GM12878 (cell line): ENCODE measurements at regions of chr6 and their contacts with region 1.

Region 1: GRCh38 chr6:152552616-152553209 is 84.4 kb downstream of the SYNE1 start:
- DNase-seq: peak; percentile 11
- ATAC-seq: peak; percentile 99
- H3K4me3 ChIP-seq: no peak overlapping the region
- H3K27ac ChIP-seq: no peak overlapping the region
- H3K4me1 ChIP-seq: no peaks in the 10 kb centered on the region
- H3K27me3 ChIP-seq: no peaks in the 10 kb centered on the region
- CTCF ChIP-seq: peak; percentile 72 to 79 (median 72)
- EP300 ChIP-seq: no peak
- POLR2A ChIP-seq: no peak
- RAD21 ChIP-seq: peak; percentile 78

Region 2: DNA sequence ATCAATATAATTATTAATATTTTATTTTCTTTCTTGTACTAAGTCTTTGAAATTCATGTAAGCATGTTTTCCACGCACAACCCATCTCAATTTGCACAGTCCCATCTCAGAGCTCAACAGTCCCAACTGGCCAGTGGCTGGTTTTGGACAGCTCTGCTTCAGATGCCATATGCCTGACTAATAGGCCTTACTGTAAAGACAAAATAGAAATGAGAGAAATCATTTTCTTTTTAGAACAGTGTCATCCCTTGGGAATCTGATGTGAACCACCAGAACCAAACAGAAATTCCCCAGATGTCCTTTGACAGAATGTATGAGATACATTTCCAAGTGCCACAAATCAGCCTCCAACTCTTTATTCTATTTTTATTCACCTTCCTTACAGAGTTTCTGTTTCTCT is 406.3 kb before region 1 on chr6:
- CTCF ChIA-PET with region 1: no interaction called
- POLR2A ChIA-PET with region 1: no interaction called
- RAD21 ChIA-PET with region 1: no interaction called
- SMC1A ChIA-PET with region 1: no interaction called
- in situ Hi-C with region 1: no loop called
- intact Hi-C with region 1: no loop called
- DNase-seq: no peak
- ATAC-seq: no peak
- H3K4me3 ChIP-seq: no peak overlapping the region
- H3K27ac ChIP-seq: no peak overlapping the region
- H3K4me1 ChIP-seq: no peaks in the 10 kb centered on the region
- H3K27me3 ChIP-seq: no peaks in the 10 kb centered on the region
- CTCF ChIP-seq: no peak
- EP300 ChIP-seq: no peak
- POLR2A ChIP-seq: no peak
- RAD21 ChIP-seq: no peak

Region 3: DNA sequence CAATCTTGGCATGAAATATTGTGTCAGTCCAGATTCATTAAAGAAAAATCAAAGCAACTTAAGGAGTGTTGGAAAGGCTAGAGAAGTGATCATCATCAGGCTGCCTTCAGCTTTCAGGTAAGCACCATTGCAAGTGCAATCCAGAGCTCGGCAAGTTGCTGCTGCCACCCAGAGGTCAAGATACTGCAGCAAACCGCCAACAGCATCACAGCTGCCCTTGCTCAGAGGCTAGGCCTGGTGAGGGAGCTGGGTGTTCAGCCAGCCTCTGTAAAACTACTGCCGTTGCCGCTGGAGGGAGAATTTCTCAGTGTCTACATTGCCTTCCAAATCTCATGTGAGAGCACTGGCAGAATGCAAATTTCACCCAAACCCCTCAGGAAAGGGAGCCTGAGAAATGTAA is 90.3 kb after region 1 on chr6:
- CTCF ChIA-PET with region 1: interaction called, 16 read pairs
- POLR2A ChIA-PET with region 1: no interaction called
- RAD21 ChIA-PET with region 1: interaction called, 5 read pairs
- SMC1A ChIA-PET with region 1: interaction called, 6 read pairs
- in situ Hi-C with region 1: no loop called
- intact Hi-C with region 1: loop called (anchors 1 kb)
- DNase-seq: no peak
- ATAC-seq: peak; percentile 96
- H3K4me3 ChIP-seq: no peak overlapping the region
- H3K27ac ChIP-seq: no peak overlapping the region
- H3K4me1 ChIP-seq: no peaks in the 10 kb centered on the region
- H3K27me3 ChIP-seq: no peaks in the 10 kb centered on the region; a peak in 1 of 4 replicates
- CTCF ChIP-seq: peak; percentile 48 to 56 (median 51); a peak in 5 of 6 replicates
- EP300 ChIP-seq: no peak
- POLR2A ChIP-seq: no peak
- RAD21 ChIP-seq: peak; percentile 42

Region 4: GRCh38 chr6:152669895-152670294 is 117.2 kb after region 1 on chr6:
- CTCF ChIA-PET with region 1: interaction called, 6 read pairs
- POLR2A ChIA-PET with region 1: no interaction called
- RAD21 ChIA-PET with region 1: interaction called, 3 read pairs
- SMC1A ChIA-PET with region 1: interaction called, 4 read pairs
- in situ Hi-C with region 1: no loop called
- intact Hi-C with region 1: loop called (anchors 1 kb)
- DNase-seq: no peak
- ATAC-seq: peak; percentile 65
- H3K4me3 ChIP-seq: no peak overlapping the region
- H3K27ac ChIP-seq: no peak overlapping the region
- H3K4me1 ChIP-seq: no peaks in the 10 kb centered on the region
- H3K27me3 ChIP-seq: no peaks in the 10 kb centered on the region
- CTCF ChIP-seq: peak in 1 of 3 experiments; percentile 22; a peak in 2 of 6 replicates
- EP300 ChIP-seq: no peak
- POLR2A ChIP-seq: no peak
- RAD21 ChIP-seq: peak; percentile 47

Region 5: DNA sequence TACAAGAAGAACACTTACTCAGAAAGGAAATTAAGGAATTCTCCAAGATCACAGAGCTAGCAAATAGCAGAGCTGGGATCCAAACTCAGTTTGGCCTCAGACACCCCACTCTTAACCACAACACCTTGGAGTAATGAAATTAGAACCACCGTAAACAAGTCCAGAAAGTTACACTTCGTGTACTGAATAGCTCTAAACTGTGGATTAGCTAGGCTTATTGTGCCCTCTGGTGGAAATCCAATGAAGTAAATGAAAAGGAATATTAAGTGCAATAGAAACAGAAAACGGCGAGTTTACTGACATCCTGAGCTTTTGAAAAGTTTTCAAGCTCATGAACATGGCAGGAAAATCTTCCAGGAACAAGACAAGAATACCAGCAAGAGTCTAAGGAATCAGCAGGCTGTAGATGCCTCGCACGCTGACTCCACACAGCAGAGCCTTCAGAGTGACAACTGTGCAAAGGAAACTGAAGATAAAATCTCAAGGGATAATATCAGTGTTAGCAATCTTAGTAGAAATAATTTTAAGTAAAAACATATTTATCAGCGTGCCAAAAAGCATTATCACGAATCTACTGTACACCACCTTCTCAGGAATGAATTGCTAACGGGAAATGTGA is 395.5 kb after region 1 on chr6:
- CTCF ChIA-PET with region 1: interaction called, 10 read pairs
- POLR2A ChIA-PET with region 1: no interaction called
- RAD21 ChIA-PET with region 1: interaction called, 3 read pairs
- SMC1A ChIA-PET with region 1: interaction called, 5 read pairs
- in situ Hi-C with region 1: no loop called
- intact Hi-C with region 1: loop called (anchors 5 kb)
- DNase-seq: no peak
- ATAC-seq: peak; percentile 91
- H3K4me3 ChIP-seq: no peak overlapping the region
- H3K27ac ChIP-seq: no peak overlapping the region
- H3K4me1 ChIP-seq: no peaks in the 10 kb centered on the region
- H3K27me3 ChIP-seq: no peaks in the 10 kb centered on the region
- CTCF ChIP-seq: peak; percentile 54 to 62 (median 60)
- EP300 ChIP-seq: no peak
- POLR2A ChIP-seq: no peak
- RAD21 ChIP-seq: peak; percentile 79